AG04450 (cell line): ENCODE measurements at regions of chr2 and their contacts with region 1.

Region 1: GRCh38 chr2:207166039-207166348 is 246 bp upstream of the KLF7 start:
- DNase-seq: peak; percentile 99
- H3K4me3 ChIP-seq: peak overlapping the region; percentile 69
- H3K27ac ChIP-seq: peak overlapping the region; percentile 98
- H3K27me3 ChIP-seq: no peaks in the 10 kb centered on the region
- CTCF ChIP-seq: no peak

Region 2: GRCh38 chr2:207180741-207181140 is 14.7 kb after region 1 on chr2:
- CTCF ChIA-PET with region 1: interaction called, 3 read pairs
- POLR2A ChIA-PET with region 1: interaction called, 18 read pairs
- DNase-seq: no peak
- H3K4me3 ChIP-seq: no peak overlapping the region
- H3K27ac ChIP-seq: no peak overlapping the region
- H3K27me3 ChIP-seq: no peaks in the 10 kb centered on the region
- CTCF ChIP-seq: no peak

Region 3: GRCh38 chr2:207219676-207220501 is 53.9 kb after region 1 on chr2:
- CTCF ChIA-PET with region 1: no interaction called
- POLR2A ChIA-PET with region 1: interaction called, 14 read pairs
- DNase-seq: peak; percentile 47
- H3K4me3 ChIP-seq: no peak overlapping the region
- H3K27ac ChIP-seq: no peak overlapping the region
- H3K27me3 ChIP-seq: no peaks in the 10 kb centered on the region
- CTCF ChIP-seq: no peak

Region 4: GRCh38 chr2:207258263-207258991 is 92.4 kb after region 1 on chr2:
- CTCF ChIA-PET with region 1: interaction called, 5 read pairs
- POLR2A ChIA-PET with region 1: interaction called, 213 read pairs
- DNase-seq: peak; percentile 99
- H3K4me3 ChIP-seq: no peak overlapping the region
- H3K27ac ChIP-seq: peak overlapping the region; percentile 97
- H3K27me3 ChIP-seq: no peaks in the 10 kb centered on the region
- CTCF ChIP-seq: peak; percentile 30

Region 5: DNA sequence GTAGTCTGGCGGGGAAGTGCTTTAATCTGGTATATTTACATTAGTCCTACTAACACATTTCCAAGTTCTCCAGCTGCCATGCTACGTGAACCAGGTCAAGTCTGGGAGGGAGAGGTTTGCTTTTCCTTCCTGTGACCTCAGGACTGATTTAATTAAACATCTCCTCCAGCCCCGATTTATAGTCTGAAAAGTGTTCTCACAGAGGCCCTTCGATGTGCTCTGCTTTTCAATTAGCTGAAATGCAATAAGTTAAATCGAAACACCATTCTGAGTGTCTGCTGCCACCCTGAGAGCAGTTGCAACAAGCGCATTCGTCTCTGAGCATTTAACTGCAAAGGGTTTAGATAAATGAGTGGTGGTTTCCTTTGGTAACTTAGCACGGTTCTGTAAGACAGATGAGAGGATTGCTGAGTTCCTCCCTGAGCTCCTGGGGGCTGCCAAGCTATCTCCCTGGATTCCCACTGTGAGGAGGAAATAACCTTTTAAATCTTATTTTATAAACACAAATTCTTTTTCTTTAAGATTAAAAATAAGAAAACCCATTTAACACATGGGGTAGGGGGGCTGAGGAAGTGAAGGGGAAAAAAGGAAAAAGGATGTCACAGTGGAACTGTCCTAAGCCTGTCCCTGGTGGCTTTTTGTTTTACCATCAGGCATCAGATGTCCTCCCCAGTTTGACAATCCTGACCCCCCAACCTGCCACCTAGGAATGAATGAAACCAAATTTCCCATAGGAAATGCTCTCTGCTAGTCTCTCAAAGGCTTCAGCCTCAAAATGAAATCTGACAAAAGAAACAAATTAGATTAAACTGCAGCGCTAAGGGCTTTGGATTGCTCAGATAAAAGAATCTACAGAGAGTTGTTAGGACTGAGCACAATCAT is 307.3 kb after region 1 on chr2:
- CTCF ChIA-PET with region 1: interaction called, 22 read pairs
- POLR2A ChIA-PET with region 1: interaction called, 13 read pairs
- DNase-seq: peak; percentile 65
- H3K4me3 ChIP-seq: no peak overlapping the region
- H3K27ac ChIP-seq: no peak overlapping the region
- H3K27me3 ChIP-seq: no peaks in the 10 kb centered on the region
- CTCF ChIP-seq: peak; percentile 89

Region 6: DNA sequence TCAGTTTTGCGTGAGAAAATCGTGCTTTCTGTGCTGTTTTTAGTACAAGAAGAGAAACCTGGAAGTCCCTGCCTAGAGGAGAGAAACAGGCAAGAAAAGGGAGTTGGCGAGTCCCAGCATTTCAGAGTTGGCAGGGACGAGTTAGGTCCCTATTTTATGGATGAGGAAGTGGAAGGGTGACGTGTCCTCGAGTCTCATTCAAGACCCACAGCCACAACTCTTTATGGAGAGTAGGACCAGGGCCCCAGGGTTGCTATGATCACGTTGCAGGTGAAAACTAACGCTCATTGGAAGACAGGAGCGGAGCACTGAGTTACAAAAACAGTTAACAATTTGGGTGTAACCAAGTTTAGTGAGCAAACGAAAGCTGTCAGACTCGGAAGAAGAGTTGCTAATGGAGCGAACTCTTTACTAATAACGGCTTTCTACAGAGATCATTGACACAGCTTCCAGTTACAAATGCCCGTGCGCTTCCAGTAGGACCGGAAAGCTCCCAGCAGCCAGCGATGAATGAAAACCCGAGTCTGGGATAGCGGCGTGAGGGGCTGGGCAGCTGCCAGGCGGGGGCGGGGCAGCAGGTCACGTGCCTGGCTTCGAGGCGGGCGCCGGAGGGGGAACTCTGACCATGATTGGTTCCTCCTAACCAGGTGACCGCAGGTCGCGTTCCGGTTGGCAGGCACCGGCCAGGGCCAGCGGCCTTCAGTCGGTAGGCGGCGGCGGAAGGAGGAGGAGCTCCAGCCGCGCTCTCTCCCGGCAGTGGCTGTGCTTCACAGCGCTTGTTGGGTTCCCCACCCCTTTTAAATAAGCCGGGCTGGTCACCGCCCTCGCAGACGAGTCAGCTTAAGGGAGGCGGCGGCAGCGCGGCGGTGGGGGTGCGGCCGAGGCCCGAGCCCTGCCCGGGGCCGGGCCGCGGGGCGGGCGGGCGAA is 545.1 kb after region 1 on chr2 and contains the start of gene CCNYL1:
- CTCF ChIA-PET with region 1: no interaction called
- POLR2A ChIA-PET with region 1: no interaction called
- DNase-seq: peak; percentile 98
- H3K4me3 ChIP-seq: peak within 1 kb of the TSS; percentile 89
- H3K27ac ChIP-seq: peak within 1 kb of the TSS; percentile 73
- H3K27me3 ChIP-seq: no peaks in the 10 kb centered on the region
- CTCF ChIP-seq: peak; percentile 18; the same call in 1 of the 2 replicates
- polyA plus RNA-seq, gene CCNYL1: 15.7 and 20.5 TPM in 2 replicates